ENCODE measurements at regions of chr17 and their contacts with region 1.

Region 1: GRCh38 chr17:35612924-35613521 is 25.9 kb downstream of the AP2B1 start:
- DNase-seq: peak in 1 of 2 donors; percentile 70
- ATAC-seq: peak; percentile 68

Region 2: GRCh38 chr17:35080536-35080935 is 532.5 kb before region 1 on chr17:
- intact Hi-C with region 1: no loop called
- DNase-seq: no peak
- ATAC-seq: no peak

Region 3: GRCh38 chr17:35510052-35510451 is 103.0 kb before region 1 on chr17:
- intact Hi-C with region 1: no loop called
- DNase-seq: no peak
- ATAC-seq: no peak

Region 4: GRCh38 chr17:35521150-35521549 is 91.9 kb before region 1 on chr17:
- intact Hi-C with region 1: no loop called
- DNase-seq: no peak
- ATAC-seq: no peak

Region 5: GRCh38 chr17:35747540-35748017 is 134.6 kb after region 1 on chr17:
- intact Hi-C with region 1: loop called in 1 of 2 experiments (anchors 10 kb)
- DNase-seq: peak; percentile 58 to 84
- ATAC-seq: peak; percentile 84